ENCODE measurements at regions of chr21 and their contacts with region 1.

Region 1: DNA sequence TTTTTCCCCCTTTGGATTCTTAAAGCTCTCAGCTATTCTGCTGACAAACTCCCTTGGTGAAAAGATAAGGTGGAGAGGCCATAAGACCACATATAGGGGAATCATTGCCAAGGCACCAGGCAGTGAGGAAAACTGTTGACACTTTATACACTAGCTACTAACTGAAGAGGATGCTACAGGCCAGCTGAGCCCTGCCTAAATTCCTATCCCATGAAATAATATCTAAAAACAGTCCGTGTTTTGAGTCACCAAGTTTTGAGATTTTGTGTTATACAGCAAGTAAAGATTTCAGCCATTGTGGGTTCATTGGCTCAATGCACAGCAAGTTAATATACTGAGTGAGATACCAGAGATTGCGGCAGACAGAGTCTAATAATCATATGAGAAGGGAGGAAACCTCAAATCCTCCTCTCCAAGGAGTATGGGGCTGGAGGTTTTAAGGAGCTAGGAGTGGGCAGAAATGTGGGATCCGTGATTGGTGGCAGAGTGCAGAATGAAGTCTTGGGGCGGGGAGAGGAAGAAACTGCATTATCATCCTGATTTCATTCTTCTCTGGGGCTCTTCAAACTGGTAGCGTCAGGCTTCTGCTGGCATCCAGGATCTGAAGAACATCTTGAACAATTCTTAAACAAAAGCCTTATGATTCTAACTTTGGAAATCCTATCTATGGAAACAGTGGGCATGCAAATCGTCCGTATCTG is 9.2 kb downstream of the CLDN8 start:
- DNase-seq: no peak
- H3K4me3 ChIP-seq: no peak overlapping the region
- H3K27ac ChIP-seq: no peak overlapping the region
- H3K4me1 ChIP-seq: no peaks in the 10 kb centered on the region
- H3K27me3 ChIP-seq: no peaks in the 10 kb centered on the region
- CTCF ChIP-seq: no peak
- EP300 ChIP-seq: no peak
- POLR2A ChIP-seq: no peak

Region 2: GRCh38 chr21:30146558-30147302 is 60.0 kb before region 1 on chr21:
- intact Hi-C with region 1: loop called in 1 of 4 experiments (anchors 10 kb)
- DNase-seq: no peak
- H3K4me3 ChIP-seq: no peak overlapping the region
- H3K27ac ChIP-seq: no peak overlapping the region
- H3K4me1 ChIP-seq: no peaks in the 10 kb centered on the region
- H3K27me3 ChIP-seq: no peaks in the 10 kb centered on the region
- CTCF ChIP-seq: no peak
- EP300 ChIP-seq: no peak
- POLR2A ChIP-seq: no peak

Region 3: GRCh38 chr21:30408782-30409494 is 202.2 kb after region 1 on chr21:
- intact Hi-C with region 1: no loop called
- DNase-seq: no peak
- H3K4me3 ChIP-seq: no peak overlapping the region
- H3K27ac ChIP-seq: no peak overlapping the region
- H3K4me1 ChIP-seq: no peaks in the 10 kb centered on the region
- H3K27me3 ChIP-seq: no peaks in the 10 kb centered on the region
- CTCF ChIP-seq: no peak
- EP300 ChIP-seq: no peak
- POLR2A ChIP-seq: no peak

Region 4: DNA sequence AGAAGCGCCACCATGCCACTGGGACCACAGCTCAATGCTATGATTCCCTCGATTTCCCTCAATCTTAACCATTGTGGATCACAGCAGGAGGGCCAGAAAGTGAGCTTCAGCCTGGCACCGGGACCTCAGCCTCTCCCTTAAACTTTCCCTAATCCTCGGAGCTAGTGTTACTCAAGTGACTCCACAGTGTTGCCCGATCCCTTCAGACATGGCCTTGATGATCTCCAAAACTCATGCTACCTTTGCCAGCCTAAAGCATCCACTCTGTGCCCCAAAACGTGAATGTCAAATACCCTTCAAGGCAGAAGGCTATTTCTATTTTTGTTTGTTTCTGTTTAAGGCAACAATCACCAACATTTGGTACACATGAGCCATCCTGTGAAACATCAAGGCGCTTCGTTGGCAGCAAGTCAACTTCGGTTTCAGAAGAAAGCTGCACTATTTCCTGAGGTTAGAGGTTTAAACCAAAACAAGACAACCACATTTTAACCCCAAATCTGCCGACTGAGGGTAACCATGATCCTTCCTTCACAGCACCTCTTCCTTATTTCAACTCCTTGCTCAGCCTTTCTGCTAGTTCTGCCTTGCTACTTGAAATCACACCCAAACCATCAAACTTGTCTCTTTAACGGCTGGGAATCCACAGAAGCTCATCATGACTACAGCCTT is 926.0 kb after region 1 on chr21:
- intact Hi-C with region 1: no loop called
- DNase-seq: no peak
- H3K4me3 ChIP-seq: no peak overlapping the region
- H3K27ac ChIP-seq: no peak overlapping the region
- H3K4me1 ChIP-seq: no peaks in the 10 kb centered on the region
- H3K27me3 ChIP-seq: no peaks in the 10 kb centered on the region
- CTCF ChIP-seq: no peak
- EP300 ChIP-seq: no peak
- POLR2A ChIP-seq: no peak